Pancreas (tissue), 10 donors: ENCODE measurements at regions of chr7 and their contacts with region 1.

Region 1: GRCh38 chr7:55423277-55423711 is 58.2 kb downstream of the LANCL2 start:
- DNase-seq: no peak
- ATAC-seq: no peak
- H3K4me3 ChIP-seq: no peak overlapping the region
- H3K27ac ChIP-seq: no peak overlapping the region
- H3K4me1 ChIP-seq: no peaks in the 10 kb centered on the region
- H3K27me3 ChIP-seq: no peaks in the 10 kb centered on the region
- CTCF ChIP-seq: no peak

Region 2: GRCh38 chr7:55288070-55288824 is 135.0 kb before region 1 on chr7:
- intact Hi-C with region 1: loop called in 1 of 3 experiments (anchors 5 kb)
- DNase-seq: no peak
- ATAC-seq: no peak
- H3K4me3 ChIP-seq: no peak overlapping the region
- H3K27ac ChIP-seq: no peak overlapping the region
- H3K4me1 ChIP-seq: no peaks in the 10 kb centered on the region
- H3K27me3 ChIP-seq: peaks cover 0 to 6% (median 0%) of the 10 kb centered on the region in 4 donors
- CTCF ChIP-seq: no peak

Region 3: DNA sequence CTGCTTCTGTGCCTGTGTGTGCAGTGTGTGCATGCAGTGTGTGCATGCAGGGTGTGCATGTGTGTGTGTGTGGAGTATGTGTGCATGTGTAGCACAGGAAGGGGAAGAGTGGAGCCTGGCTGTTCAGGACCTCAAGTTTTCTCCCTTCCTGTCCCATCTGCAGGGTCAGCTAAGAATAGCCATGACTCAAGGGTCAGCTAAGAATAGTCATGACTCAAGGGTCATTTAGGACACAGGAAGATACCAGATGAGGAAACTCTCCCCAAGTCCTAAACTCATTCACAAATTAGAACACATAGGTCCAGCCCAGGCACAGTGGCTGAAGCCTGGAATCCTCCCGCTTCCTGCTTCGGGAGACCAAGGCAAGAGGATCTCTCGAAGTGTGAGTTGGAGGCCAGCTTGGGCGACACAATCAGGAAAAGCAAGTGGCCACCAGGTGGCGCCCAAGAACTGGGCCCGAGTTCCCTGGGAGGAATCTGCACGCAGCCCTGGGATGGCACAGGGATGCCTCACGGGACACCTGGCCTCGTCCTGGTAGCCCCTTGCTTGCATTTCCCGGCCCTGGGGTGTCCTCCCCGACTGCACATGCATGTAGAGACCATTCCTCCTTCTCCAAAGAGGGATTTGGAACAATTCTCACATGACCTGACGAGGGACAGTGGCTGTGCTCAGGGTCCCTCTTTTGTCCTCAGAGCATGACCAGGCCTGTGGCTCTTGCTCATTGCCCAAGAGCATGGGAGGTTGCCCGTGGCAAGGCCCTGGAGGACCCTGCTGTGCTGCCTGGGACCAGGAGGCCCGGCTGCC is 170.4 kb after region 1 on chr7:
- intact Hi-C with region 1: loop called in 1 of 3 experiments (anchors 10 kb)
- DNase-seq: peak in 4 of 6 donors; percentile 55 to 90 (median 76)
- ATAC-seq: peak; percentile 52 to 72 (median 64)
- H3K4me3 ChIP-seq: no peak overlapping the region
- H3K27ac ChIP-seq: no peak overlapping the region
- H3K4me1 ChIP-seq: no peaks in the 10 kb centered on the region
- H3K27me3 ChIP-seq: no peaks in the 10 kb centered on the region
- CTCF ChIP-seq: peak; percentile 61 to 72 (median 67)